ENCODE measurements at regions of chr16 and their contacts with region 1.

Region 1: DNA sequence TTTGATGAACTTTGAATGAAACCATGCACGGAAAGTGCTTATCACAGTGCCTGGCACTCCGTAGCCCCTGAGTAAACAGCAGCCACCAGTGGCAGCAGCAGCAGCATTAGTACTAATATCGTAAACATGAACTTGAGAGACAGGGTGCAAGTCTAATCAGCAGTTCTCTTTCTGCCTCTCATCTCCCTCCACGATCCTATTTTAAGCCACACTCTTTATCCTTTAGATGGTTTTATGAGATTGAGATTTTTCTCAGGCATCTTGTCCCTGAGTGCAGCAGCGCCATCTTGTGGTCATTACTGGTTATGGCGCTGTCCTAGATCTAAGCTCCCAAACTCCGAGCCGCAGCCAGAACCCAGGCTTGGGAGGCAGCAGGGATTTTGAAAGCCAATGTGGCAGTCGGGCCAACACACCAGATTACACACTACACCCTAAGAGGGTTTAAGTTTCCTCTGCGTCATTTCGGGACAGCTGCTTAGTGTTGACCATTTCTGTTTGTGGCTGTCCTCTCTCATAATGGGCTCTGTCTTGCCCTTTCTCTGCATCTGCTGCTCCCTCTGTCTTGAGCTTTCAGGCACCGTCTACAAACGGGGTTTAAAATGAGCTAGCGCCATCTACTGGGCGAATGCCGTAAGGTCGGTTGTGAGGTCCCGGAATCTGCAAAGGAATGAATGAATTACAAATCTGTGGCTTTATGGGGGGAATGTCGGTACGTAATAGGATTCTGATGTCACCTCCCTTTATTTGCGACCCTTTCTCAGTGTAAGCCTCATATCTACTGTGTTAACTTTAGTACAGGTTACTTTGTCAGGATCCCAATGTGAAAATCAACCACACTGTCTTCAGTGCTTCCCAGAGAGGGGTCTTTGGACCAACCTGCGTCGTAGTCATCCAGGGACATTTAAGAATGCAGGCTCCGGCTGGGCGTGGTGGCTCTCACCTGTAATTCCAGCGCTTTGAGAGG is 64.5 kb downstream of the CYLD start:
- DNase-seq: peak; percentile 87
- ATAC-seq: peak; percentile 92
- H3K4me3 ChIP-seq: peak overlapping the region; percentile 45
- H3K27ac ChIP-seq: no peak overlapping the region; the same call in 1 of the 2 replicates
- H3K4me1 ChIP-seq: peaks cover 4% of the 10 kb centered on the region
- H3K27me3 ChIP-seq: no peaks in the 10 kb centered on the region
- CTCF ChIP-seq: peak; percentile 84
- POLR2A ChIP-seq: no peak
- RAD21 ChIP-seq: peak; percentile 78

Region 2: DNA sequence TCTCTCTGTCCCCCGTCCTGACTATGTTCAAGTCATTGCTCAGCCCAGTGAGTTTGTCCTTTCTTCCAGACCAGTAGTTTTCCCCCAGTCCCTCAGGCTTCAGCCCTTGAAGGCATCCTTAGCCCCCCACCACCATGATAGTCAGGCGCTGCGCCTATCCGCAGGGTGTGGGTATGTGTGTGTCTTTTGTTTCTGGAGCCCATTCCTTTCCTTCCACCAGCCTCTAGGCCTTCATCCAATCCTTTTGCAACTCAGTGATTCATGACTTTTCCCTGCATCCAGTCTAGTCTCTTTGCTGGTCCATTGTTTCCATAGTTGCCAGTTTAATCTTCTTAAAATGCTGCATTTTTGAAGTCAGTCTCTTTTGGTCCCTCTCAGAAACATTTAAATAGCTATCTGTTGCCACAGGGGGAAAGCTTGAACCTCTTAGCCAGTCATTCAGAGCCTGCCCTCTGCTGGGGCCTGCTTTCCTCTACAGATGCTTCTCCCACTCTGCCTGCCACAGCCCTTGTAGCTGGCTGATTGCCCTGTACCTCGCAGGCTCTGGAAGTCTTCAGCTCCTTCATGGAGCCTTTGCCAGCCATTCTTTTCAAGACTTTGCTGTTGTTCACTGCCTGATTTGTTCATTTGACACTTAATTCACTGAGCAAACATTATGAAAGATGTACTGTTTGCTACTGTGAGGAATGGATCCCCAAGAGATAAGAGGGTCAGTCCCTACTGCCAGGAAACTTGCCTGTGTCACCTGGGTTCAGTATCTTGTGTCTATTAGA is 595.9 kb before region 1 on chr16:
- CTCF ChIA-PET with region 1: no interaction called
- POLR2A ChIA-PET with region 1: no interaction called
- dilution Hi-C with region 1: no loop called
- in situ Hi-C with region 1: no loop called
- intact Hi-C with region 1: loop called (anchors 5 kb)
- DNase-seq: peak; percentile 87
- ATAC-seq: peak; percentile 91
- H3K4me3 ChIP-seq: no peak overlapping the region
- H3K27ac ChIP-seq: no peak overlapping the region
- H3K4me1 ChIP-seq: peaks cover 13% of the 10 kb centered on the region
- H3K27me3 ChIP-seq: no peaks in the 10 kb centered on the region
- CTCF ChIP-seq: peak; percentile 87
- POLR2A ChIP-seq: no peak
- RAD21 ChIP-seq: peak; percentile 87

Region 3: DNA sequence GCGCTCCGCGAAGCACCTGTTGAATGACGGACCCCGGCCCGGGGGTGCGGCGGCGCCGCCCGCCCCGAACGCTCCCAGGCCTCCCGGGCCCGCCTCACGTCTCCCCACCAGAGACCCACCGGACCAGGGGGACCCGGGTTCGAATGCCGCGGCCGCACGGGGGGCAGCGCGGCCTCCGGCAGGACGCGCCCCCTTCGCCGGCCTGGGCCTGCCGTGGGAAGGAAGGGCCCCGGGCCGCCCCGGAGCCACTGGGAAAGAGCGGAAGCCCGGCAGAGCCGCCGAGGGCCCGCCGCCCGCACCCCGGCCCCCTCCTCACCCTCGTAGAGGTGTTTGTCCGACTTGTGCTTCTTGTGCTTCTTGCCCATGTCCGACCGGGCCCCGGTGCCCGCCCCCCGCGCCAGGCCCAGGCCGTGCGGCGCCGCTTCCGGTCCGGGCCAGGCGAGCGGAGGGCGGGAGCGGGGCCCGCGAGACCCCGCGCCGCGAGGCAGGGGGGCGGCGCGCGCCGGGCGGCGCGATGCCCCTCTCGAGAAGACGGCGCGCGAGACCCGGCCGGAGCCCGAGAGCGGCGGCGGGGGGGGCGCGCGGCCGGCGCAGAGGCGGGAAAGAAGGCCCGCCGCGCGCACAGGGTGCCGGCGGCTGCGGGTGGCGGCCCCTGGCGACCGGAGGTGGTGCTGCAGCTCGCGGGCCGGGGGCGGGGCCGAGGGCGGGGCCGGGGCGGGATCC is 437.8 kb before region 1 on chr16 and contains the start of gene BRD7:
- CTCF ChIA-PET with region 1: interaction called, 5 read pairs
- POLR2A ChIA-PET with region 1: no interaction called
- dilution Hi-C with region 1: no loop called
- in situ Hi-C with region 1: loop called (anchors 10 kb)
- intact Hi-C with region 1: loop called (anchors 1 kb)
- DNase-seq: peak; percentile 37
- ATAC-seq: peak; percentile 96
- H3K4me3 ChIP-seq: peak within 1 kb of the TSS; percentile 88
- H3K27ac ChIP-seq: peak within 1 kb of the TSS; percentile 33; the same call in 1 of the 2 replicates
- H3K4me1 ChIP-seq: peaks cover 2% of the 10 kb centered on the region; the same call in 1 of the 2 replicates
- H3K27me3 ChIP-seq: peaks cover 10% of the 10 kb centered on the region
- CTCF ChIP-seq: peak; percentile 56
- POLR2A ChIP-seq: no peak
- RAD21 ChIP-seq: peak; percentile 29
- total RNA-seq, gene BRD7: 29.9 and 38.9 TPM in 2 replicates

Region 4: DNA sequence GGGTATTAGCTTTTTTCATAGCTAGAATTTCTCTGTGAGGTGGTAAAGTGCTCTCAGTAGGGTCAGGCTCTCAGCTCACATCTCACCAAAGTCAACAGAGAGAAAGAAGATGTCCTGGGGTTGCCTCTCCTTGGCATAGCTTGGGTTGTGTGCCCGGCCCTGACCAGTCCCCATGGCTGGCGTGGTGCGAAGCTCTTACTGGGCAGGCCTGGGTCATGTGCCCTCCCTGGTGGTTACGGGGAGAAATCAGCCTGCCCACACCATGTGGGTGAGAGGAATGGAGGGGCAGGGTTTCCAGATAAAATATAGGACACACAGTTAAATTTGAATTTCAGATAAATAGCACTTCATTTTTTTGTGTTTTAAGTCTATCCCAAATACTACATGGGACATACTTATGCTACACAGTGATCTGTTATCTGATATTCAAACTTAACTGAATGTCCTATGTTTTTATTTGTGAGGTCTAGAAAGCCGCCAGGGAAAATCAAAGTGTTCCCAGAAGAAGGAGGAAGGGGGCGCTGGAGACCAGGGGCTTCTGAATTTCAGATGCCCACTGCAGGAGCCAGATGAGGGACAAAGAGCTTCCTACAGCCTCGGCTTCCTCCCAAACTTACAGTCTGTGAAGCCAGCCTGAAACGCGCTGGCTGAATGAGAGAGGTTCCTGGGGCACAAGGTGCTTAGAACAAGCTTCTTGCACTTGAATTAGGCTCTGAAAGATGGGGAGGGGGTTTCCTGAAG is 212.8 kb before region 1 on chr16:
- CTCF ChIA-PET with region 1: interaction called, 3 read pairs
- POLR2A ChIA-PET with region 1: no interaction called
- dilution Hi-C with region 1: no loop called
- in situ Hi-C with region 1: no loop called
- intact Hi-C with region 1: loop called (anchors 5 kb)
- DNase-seq: no peak
- ATAC-seq: no peak
- H3K4me3 ChIP-seq: no peak overlapping the region
- H3K27ac ChIP-seq: no peak overlapping the region
- H3K4me1 ChIP-seq: no peaks in the 10 kb centered on the region
- H3K27me3 ChIP-seq: peaks cover 8% of the 10 kb centered on the region
- CTCF ChIP-seq: peak; percentile 23; the same call in 1 of the 2 replicates
- POLR2A ChIP-seq: no peak
- RAD21 ChIP-seq: peak; percentile 32

Region 5: DNA sequence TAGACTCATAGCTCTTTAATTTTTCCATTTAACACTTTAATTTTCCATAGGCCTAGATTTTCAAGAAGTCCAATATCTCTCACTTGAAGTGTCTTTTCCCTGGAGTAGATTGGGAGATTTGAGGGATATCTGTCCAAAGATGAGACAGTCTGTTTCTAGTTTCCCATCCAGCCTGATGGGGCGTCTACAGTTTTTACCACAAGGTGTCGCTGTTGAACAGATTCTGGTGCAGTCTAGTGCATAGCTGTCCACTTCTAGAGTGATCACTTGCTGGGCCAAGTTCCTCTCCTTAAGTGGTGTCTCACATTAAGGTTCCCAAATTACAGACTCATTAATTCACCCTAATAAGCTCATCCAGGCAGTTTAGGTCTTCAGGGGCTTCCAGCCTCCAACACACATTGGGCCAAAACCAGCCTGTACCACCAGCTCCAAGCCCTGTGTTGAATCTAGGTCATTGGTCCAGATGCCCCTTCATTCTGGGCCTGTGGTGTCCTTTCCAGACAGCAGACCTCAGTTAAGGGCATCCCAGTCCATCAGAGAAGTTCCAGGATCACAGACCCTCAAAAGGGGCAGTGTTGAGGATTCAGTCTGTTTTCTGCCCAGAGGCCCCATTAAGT is 134.6 kb before region 1 on chr16:
- CTCF ChIA-PET with region 1: interaction called, 17 read pairs
- POLR2A ChIA-PET with region 1: no interaction called
- dilution Hi-C with region 1: no loop called
- in situ Hi-C with region 1: no loop called
- intact Hi-C with region 1: loop called (anchors 1 kb)
- DNase-seq: peak; percentile 16
- ATAC-seq: no peak
- H3K4me3 ChIP-seq: no peak overlapping the region
- H3K27ac ChIP-seq: no peak overlapping the region
- H3K4me1 ChIP-seq: no peaks in the 10 kb centered on the region
- H3K27me3 ChIP-seq: peaks cover 5% of the 10 kb centered on the region
- CTCF ChIP-seq: peak; percentile 42
- POLR2A ChIP-seq: no peak
- RAD21 ChIP-seq: peak; percentile 38

Region 6: GRCh38 chr16:50741808-50742575 is 64.4 kb before region 1 on chr16 and contains the start of gene CYLD:
- CTCF ChIA-PET with region 1: interaction called, 6 read pairs
- POLR2A ChIA-PET with region 1: no interaction called
- dilution Hi-C with region 1: no loop called
- in situ Hi-C with region 1: no loop called
- intact Hi-C with region 1: loop called (anchors 1 kb)
- DNase-seq: peak; percentile 99
- ATAC-seq: peak; percentile 97
- H3K4me3 ChIP-seq: peak within 1 kb of the TSS; percentile 98
- H3K27ac ChIP-seq: peak within 1 kb of the TSS; percentile 67
- H3K4me1 ChIP-seq: peaks cover 9% of the 10 kb centered on the region
- H3K27me3 ChIP-seq: peaks cover 8% of the 10 kb centered on the region
- CTCF ChIP-seq: no peak
- POLR2A ChIP-seq: no peak; the same call in 1 of the 2 replicates
- RAD21 ChIP-seq: no peak
- total RNA-seq, gene CYLD: 37.3 and 50.8 TPM in 2 replicates

Region 7: GRCh38 chr16:50862818-50863643 is 56.6 kb after region 1 on chr16:
- CTCF ChIA-PET with region 1: no interaction called
- POLR2A ChIA-PET with region 1: no interaction called
- dilution Hi-C with region 1: no loop called
- in situ Hi-C with region 1: no loop called
- intact Hi-C with region 1: no loop called
- DNase-seq: no peak
- ATAC-seq: no peak
- H3K4me3 ChIP-seq: no peak overlapping the region
- H3K27ac ChIP-seq: no peak overlapping the region
- H3K4me1 ChIP-seq: peaks cover 4% of the 10 kb centered on the region; the same call in 1 of the 2 replicates
- H3K27me3 ChIP-seq: no peaks in the 10 kb centered on the region
- CTCF ChIP-seq: no peak
- POLR2A ChIP-seq: no peak
- RAD21 ChIP-seq: no peak

Region 8: GRCh38 chr16:51129105-51129504 is 322.7 kb after region 1 on chr16:
- CTCF ChIA-PET with region 1: no interaction called
- POLR2A ChIA-PET with region 1: no interaction called
- dilution Hi-C with region 1: no loop called
- in situ Hi-C with region 1: no loop called
- intact Hi-C with region 1: no loop called
- DNase-seq: peak; percentile 2
- ATAC-seq: 0 out of 2 replicates have a peak, but pooled peaks have one; percentile 42
- H3K4me3 ChIP-seq: no peak overlapping the region
- H3K27ac ChIP-seq: no peak overlapping the region
- H3K4me1 ChIP-seq: peaks cover 4% of the 10 kb centered on the region; the same call in 1 of the 2 replicates
- H3K27me3 ChIP-seq: peaks cover 22% of the 10 kb centered on the region
- CTCF ChIP-seq: no peak
- POLR2A ChIP-seq: no peak
- RAD21 ChIP-seq: no peak

Region 9: GRCh38 chr16:51982715-51983680 is 1176.6 kb after region 1 on chr16:
- CTCF ChIA-PET with region 1: no interaction called
- POLR2A ChIA-PET with region 1: no interaction called
- dilution Hi-C with region 1: no loop called
- in situ Hi-C with region 1: loop called (anchors 25 kb)
- intact Hi-C with region 1: loop called (anchors 1 kb)
- DNase-seq: peak; percentile 78
- ATAC-seq: peak; percentile 72
- H3K4me3 ChIP-seq: no peak overlapping the region
- H3K27ac ChIP-seq: no peak overlapping the region
- H3K4me1 ChIP-seq: no peaks in the 10 kb centered on the region; the same call in 1 of the 2 replicates
- H3K27me3 ChIP-seq: no peaks in the 10 kb centered on the region
- CTCF ChIP-seq: peak; percentile 90
- POLR2A ChIP-seq: no peak
- RAD21 ChIP-seq: peak; percentile 96

Measured in IMR-90 (cell line).